GM12878 (cell line): ENCODE measurements at regions of chr12 and their contacts with region 1.

Region 1: GRCh38 chr12:32679091-32679919 is at the start of gene DNM1L:
- DNase-seq: peak; percentile 79
- ATAC-seq: peak; percentile 97
- H3K4me3 ChIP-seq: peak within 1 kb of the TSS; percentile 100
- H3K27ac ChIP-seq: peak within 1 kb of the TSS; percentile 64
- H3K4me1 ChIP-seq: peaks cover 14% of the 10 kb centered on the region
- H3K27me3 ChIP-seq: no peaks in the 10 kb centered on the region
- CTCF ChIP-seq: no peak
- EP300 ChIP-seq: no peak
- POLR2A ChIP-seq: peak; percentile 94
- RAD21 ChIP-seq: no peak
- polyA plus RNA-seq, gene DNM1L: 23.1 to 29.3 TPM

Region 2: DNA sequence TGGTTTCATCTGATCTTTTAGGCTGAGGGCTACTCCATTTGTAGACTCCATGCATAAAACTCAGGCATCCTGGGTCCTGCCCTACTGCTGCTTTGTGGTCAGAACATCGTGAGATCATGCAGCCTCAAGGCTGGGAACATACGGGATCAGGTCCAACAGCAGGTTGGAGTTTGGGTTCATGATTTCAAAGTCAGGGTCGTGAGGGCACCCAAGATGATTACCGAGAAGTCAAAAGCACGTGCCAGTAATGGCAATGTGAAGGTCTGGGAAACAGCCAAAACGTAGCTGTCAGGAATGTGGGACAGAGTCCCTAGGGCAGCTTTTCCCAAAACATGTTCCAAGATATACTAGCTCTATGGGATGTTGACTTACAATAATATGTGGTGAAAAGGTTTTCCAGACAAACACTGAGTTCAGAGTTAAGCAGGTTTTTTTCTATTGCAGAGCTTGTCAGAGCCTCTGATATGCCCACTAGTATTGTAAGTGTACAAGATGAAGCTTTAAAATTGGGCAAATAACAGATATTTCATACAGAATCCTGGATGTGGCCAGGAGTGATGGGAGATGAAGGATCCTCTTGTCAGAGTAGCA is 130.5 kb before region 1 on chr12:
- CTCF ChIA-PET with region 1: no interaction called
- POLR2A ChIA-PET with region 1: no interaction called
- RAD21 ChIA-PET with region 1: no interaction called
- SMC1A ChIA-PET with region 1: no interaction called
- in situ Hi-C with region 1: no loop called
- intact Hi-C with region 1: no loop called
- DNase-seq: no peak
- ATAC-seq: no peak
- H3K4me3 ChIP-seq: no peak overlapping the region
- H3K27ac ChIP-seq: no peak overlapping the region
- H3K4me1 ChIP-seq: no peaks in the 10 kb centered on the region
- H3K27me3 ChIP-seq: no peaks in the 10 kb centered on the region; a peak in 1 of 4 replicates
- CTCF ChIP-seq: no peak
- EP300 ChIP-seq: no peak
- POLR2A ChIP-seq: no peak
- RAD21 ChIP-seq: no peak

Region 3: GRCh38 chr12:32906407-32907165 is 227.3 kb after region 1 on chr12:
- CTCF ChIA-PET with region 1: no interaction called
- POLR2A ChIA-PET with region 1: no interaction called
- RAD21 ChIA-PET with region 1: no interaction called
- SMC1A ChIA-PET with region 1: no interaction called
- in situ Hi-C with region 1: no loop called
- intact Hi-C with region 1: loop called (anchors 10 kb)
- DNase-seq: peak; percentile 78
- ATAC-seq: peak; percentile 98
- H3K4me3 ChIP-seq: no peak overlapping the region
- H3K27ac ChIP-seq: peak overlapping the region; percentile 15; the same call in 1 of the 2 replicates
- H3K4me1 ChIP-seq: peaks cover 8% of the 10 kb centered on the region; the same call in 1 of the 2 replicates
- H3K27me3 ChIP-seq: no peaks in the 10 kb centered on the region; a peak in 1 of 4 replicates
- CTCF ChIP-seq: no peak
- EP300 ChIP-seq: peak; percentile 54 to 88; a peak in 3 of 4 replicates
- POLR2A ChIP-seq: no peak
- RAD21 ChIP-seq: no peak